Breast epithelium (tissue), 4 donors: ENCODE measurements at regions of chr10 and their contacts with region 1.

Region 1: DNA sequence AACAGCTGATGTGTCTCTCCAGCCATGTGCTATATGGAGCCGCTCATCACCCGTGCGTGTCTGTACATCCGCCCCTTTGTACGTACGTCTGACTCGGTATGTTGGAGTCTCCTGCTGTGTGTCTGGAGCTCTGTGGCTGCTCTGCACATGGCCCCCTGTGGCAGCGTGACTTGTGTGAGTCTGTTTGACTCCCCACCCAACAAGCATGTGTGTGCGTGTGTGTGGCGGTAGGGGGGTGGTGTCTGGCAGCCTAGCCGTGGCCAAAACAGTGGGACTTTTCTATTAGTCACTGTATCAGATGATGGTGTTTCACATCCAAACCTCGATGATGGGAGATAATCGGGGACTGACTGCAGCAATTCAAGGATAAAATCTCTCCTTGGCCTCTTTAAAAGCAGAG is 94.1 kb downstream of the COL13A1 start:
- DNase-seq: no peak
- H3K4me3 ChIP-seq: no peak overlapping the region
- H3K27ac ChIP-seq: peak overlapping the region in 1 of 2 donors; percentile 72
- H3K4me1 ChIP-seq: no peaks in the 10 kb centered on the region
- H3K27me3 ChIP-seq: no peaks in the 10 kb centered on the region
- CTCF ChIP-seq: no peak
- POLR2A ChIP-seq: no peak

Region 2: DNA sequence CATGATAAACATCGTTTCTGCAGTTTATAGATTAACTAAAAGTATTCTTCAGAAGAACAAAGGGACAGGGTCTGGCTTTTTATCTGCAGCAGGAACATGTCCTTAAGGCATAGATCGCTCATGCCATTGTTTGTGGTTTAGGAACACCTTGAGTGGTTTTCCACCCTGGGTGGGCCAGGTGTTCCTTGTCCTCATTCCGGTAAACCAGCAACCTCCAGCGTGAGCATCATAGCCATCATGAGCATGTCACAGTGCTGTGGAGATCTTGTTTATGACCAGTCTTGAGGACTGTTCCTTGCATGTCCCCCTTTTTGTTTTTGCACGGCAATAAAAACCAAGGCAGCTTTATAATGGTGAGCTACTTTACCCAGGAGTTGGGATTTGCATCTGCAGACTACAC is 1034.5 kb before region 1 on chr10:
- intact Hi-C with region 1: no loop called
- DNase-seq: no peak
- H3K4me3 ChIP-seq: no peak overlapping the region
- H3K27ac ChIP-seq: no peak overlapping the region
- H3K4me1 ChIP-seq: no peaks in the 10 kb centered on the region
- H3K27me3 ChIP-seq: no peaks in the 10 kb centered on the region
- CTCF ChIP-seq: no peak
- POLR2A ChIP-seq: no peak

Region 3: GRCh38 chr10:69831231-69831855 is 64.4 kb before region 1 on chr10:
- intact Hi-C with region 1: loop called (anchors 2 kb)
- DNase-seq: no peak
- H3K4me3 ChIP-seq: no peak overlapping the region
- H3K27ac ChIP-seq: no peak overlapping the region
- H3K4me1 ChIP-seq: no peaks in the 10 kb centered on the region
- H3K27me3 ChIP-seq: no peaks in the 10 kb centered on the region
- CTCF ChIP-seq: no peak
- POLR2A ChIP-seq: no peak

Region 4: GRCh38 chr10:69918036-69918435 is 22.3 kb after region 1 on chr10:
- intact Hi-C with region 1: loop called (anchors 1 kb)
- DNase-seq: no peak
- H3K4me3 ChIP-seq: no peak overlapping the region
- H3K27ac ChIP-seq: no peak overlapping the region
- H3K4me1 ChIP-seq: peaks cover 0 to 1% of the 10 kb centered on the region in 2 donors
- H3K27me3 ChIP-seq: no peaks in the 10 kb centered on the region
- CTCF ChIP-seq: no peak
- POLR2A ChIP-seq: no peak

Region 5: DNA sequence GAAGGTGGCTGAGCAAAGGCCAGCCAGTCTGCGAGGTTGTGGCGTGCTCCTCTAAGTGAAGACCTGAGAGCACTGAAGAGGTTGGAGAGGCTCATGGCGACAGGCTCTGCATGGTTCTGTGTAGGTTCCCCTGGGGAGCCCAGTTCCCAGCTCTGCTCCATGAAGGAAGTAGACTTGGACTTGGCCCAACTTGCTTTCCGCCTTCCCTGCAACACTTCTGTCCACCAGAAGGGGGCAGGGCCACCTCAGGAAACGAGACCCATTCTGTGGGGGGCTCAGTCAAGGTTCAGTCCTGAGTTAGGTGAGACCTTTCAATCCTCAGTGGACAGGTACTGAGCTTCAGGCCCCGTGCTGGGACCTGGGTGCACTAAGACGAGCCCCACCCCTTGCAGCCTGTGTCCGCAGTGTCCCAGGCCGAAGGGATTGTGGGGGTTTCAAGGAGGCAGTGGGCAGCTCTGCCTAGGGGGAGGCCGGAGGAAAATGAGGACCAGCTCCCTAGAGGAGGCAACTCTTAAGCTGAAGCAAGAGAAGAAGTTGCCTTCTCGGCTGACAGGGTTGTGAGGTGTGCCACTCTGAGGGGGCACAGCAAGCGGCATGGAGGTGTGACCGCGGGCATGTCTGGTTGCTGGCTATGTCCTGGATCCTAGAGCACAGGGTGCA is 1007.6 kb after region 1 on chr10:
- intact Hi-C with region 1: no loop called
- DNase-seq: peak; percentile 37 to 72
- H3K4me3 ChIP-seq: no peak overlapping the region
- H3K27ac ChIP-seq: no peak overlapping the region
- H3K4me1 ChIP-seq: no peaks in the 10 kb centered on the region
- H3K27me3 ChIP-seq: no peaks in the 10 kb centered on the region
- CTCF ChIP-seq: peak; percentile 71 to 80 (median 76)
- POLR2A ChIP-seq: no peak